ENCODE measurements at regions of chr12 and their contacts with region 1.

Region 1: DNA sequence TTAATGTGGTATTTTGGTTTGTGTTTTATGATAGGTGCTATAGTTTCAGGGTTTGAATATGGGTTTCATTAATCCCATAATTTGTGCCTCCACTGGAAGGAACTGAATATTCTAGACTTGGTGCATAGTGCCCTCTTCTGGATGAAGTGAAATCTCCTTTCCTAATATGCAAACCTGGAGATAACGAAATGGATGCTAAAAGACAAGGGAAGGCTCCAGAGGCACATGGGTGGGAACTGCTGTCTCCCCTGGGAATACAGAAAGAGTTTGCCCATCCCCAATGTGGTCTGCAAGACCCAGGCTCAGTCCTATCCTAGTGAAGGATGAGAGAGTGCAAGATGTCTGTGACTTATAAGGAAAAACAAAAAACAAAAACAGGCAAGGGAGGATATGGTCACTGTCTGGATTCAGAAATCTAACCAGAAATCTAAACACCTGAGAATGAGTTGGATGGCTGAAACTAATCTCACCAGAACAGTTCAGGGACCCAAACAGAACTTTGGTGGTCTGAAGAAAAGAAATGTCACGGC is 142.3 kb upstream of the TMPO start:
- DNase-seq: no peak
- H3K4me3 Mint-ChIP-seq: no peak overlapping the region
- H3K27ac Mint-ChIP-seq: no peak overlapping the region
- H3K4me1 Mint-ChIP-seq: peaks cover 32% of the 10 kb centered on the region
- H3K27me3 Mint-ChIP-seq: peaks cover 21% of the 10 kb centered on the region

Region 2: GRCh38 chr12:96985480-96986362 is 1387.4 kb before region 1 on chr12:
- intact Hi-C with region 1: loop called (anchors 2 kb)
- DNase-seq: peak; percentile 20
- H3K4me3 Mint-ChIP-seq: peak overlapping the region; percentile 60
- H3K27ac Mint-ChIP-seq: no peak overlapping the region
- H3K4me1 Mint-ChIP-seq: no peaks in the 10 kb centered on the region
- H3K27me3 Mint-ChIP-seq: peaks cover 40% of the 10 kb centered on the region

Region 3: DNA sequence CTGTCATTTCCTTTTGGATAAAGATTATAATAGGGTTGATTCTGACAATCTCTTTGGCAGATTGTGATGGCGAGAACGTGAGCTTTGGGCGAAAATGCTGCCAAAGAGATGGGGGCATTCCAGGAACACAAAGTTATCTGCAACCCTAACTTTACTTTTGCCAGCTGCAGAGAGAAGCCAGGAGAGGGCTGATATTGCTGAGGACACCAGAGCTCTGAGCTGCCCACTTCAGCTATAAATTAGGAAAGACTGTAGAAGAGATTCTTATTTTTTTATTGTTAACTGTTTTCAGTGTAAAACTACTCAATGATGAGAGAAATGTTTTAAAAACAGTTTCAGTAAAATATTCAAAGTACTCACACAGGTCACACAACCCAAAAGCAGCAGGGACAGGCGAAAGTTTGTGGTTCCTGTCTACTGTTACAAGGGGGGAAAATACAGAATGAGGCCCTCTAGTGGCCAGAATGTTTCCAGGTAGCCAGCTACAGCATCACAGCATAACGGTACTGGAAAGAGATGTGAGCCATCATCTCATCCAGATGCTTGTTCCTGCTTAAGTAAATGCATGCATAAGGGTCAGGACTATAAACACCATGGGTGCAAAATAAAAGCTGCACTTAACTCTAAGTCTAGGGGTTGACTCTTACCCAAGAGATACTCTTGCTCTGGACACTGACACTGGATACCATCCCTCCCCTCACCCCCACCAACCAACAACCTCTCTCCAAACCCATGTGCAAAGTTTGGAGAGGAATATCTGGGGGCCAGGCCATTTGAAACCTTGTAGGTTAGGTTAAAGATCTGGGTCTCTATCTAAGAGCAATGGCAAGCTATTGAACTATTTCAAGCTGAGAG is 412.1 kb before region 1 on chr12:
- intact Hi-C with region 1: loop called (anchors 1 kb)
- DNase-seq: no peak
- H3K4me3 Mint-ChIP-seq: no peak overlapping the region
- H3K27ac Mint-ChIP-seq: no peak overlapping the region
- H3K4me1 Mint-ChIP-seq: no peaks in the 10 kb centered on the region
- H3K27me3 Mint-ChIP-seq: no peaks in the 10 kb centered on the region

Region 4: GRCh38 chr12:98002712-98003493 is 370.2 kb before region 1 on chr12:
- intact Hi-C with region 1: loop called (anchors 1 kb)
- DNase-seq: peak; percentile 1
- H3K4me3 Mint-ChIP-seq: no peak overlapping the region
- H3K27ac Mint-ChIP-seq: no peak overlapping the region
- H3K4me1 Mint-ChIP-seq: no peaks in the 10 kb centered on the region
- H3K27me3 Mint-ChIP-seq: peaks cover 5% of the 10 kb centered on the region

Region 5: DNA sequence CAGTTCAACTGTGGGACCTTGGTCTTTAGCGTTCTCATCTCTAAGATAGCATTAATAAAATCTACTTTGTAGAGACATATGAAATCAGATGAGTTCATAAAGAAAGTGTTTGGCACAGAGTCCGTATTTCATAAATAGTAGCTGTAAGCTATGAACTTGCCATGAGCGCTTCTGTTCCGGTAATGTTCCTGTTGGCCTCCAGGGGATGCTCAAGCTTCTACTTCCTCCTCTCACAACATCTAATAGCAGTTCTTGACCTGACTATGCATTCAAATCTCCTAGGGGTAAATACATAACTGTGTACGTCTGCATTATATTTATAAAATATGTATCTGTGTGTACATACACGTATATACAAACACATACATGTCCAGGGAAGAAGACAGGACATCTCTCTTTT is 145.9 kb before region 1 on chr12:
- intact Hi-C with region 1: loop called (anchors 1 kb)
- DNase-seq: no peak
- H3K4me3 Mint-ChIP-seq: no peak overlapping the region
- H3K27ac Mint-ChIP-seq: no peak overlapping the region
- H3K4me1 Mint-ChIP-seq: no peaks in the 10 kb centered on the region
- H3K27me3 Mint-ChIP-seq: peaks cover 6% of the 10 kb centered on the region

Measured in activated T-helper 1 cell treated with anti-CD3 and anti-CD28 coated beads, Interleukin-12 subunit alpha, Interleukin-12 subunit beta, Interleukin-2, Interleukin-4 antibody, amounts not matched to agents 30 ng/mL and 10 ng/mL and 1 ng/mL, durations not matched to agents 14 hours and 24 hours and 36 hours (primary cell).